Activated naive CD4-positive, alpha-beta T cell treated with anti-CD3 and anti-CD28 coated beads, Interleukin-2, amount 10 ng/mL, durations not matched to agents 7 days and 5 days (primary cell): ENCODE measurements at regions of chr2 and their contacts with region 1.

Region 1: DNA sequence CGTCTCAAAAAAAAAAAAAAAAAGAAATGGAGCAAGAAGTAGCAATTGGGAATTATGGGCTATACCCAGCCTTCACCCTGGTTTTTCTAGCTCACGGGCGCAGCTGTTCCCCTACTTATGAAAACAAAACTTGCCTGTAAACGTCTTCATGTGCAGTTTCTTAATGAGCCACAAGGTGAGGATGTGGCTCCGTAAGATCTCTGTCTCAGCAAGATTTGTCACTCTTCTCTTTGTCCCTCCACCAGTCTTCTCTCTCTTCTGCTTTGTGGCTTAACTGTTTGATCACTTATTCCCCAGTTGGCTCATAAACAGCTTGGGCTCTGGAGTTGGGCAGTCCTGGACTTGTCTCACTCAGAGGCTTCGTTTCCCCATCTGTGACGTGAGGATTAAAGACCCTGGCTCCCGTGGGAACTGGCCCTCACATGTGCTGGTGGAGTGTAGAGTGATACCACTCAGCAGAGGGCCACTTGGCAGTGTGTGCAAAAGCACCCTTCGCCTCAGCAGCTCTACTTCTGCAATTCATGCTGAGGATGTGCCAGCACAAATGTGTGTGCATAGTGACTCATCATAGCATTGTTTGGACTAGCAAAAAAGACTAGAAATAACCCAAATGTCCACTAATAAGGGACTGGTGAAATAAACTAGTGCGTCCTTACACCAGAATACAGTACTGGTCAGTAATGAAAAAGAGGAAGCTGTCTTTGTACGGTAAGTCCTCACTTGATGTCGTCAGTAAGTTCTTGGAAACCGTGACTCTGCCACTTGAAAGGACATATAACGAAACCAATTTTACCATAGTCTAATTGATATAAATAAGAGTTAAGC is 8.7 kb downstream of the CEP68 start:
- DNase-seq: peak; percentile 69
- H3K4me3 Mint-ChIP-seq: no peak overlapping the region
- H3K27ac Mint-ChIP-seq: no peak overlapping the region
- H3K4me1 Mint-ChIP-seq: peaks cover 38% of the 10 kb centered on the region
- H3K27me3 Mint-ChIP-seq: no peaks in the 10 kb centered on the region

Region 2: GRCh38 chr2:64766841-64767669 is 297.9 kb before region 1 on chr2:
- CTCF ChIA-PET with region 1: no interaction called
- DNase-seq: no peak
- H3K4me3 Mint-ChIP-seq: peak overlapping the region; percentile 84
- H3K27ac Mint-ChIP-seq: peak overlapping the region; percentile 93
- H3K4me1 Mint-ChIP-seq: peaks cover 34% of the 10 kb centered on the region
- H3K27me3 Mint-ChIP-seq: peaks cover 25% of the 10 kb centered on the region

Region 3: DNA sequence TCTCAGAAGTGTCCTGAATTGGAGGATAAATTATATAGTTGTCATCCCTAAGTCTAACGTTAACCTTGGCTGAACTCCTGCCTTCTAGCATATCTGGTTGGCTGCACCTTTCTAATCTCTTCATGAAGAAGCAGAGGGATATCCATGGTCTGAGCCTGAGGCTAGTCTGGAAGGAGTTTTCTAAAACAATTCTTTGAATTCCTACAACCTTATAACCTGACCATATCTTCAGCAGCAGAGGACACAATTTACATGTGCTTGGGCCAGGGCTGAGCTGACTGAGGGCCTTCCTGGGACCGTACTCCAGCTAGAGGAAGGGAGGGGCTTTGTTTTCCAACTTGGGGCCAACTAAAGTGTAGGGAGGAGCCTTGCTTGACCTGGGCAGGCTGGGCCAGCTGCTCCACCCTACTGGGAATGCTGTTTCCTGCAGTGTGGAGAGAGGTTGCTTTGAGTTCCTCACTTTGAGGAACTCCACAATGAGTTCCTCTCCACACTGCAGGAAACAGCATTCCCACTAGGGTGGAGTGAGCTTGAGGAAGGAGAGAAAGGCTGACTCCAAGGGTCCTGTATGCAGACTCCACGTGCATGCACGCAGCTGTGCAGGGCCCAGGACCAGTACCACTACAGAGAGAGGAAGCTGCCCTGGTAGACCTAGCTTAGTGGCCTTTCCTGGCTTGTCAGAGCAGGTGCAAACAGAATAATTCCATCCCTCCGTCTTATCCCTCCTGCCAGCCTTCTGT is 10.8 kb after region 1 on chr2:
- CTCF ChIA-PET with region 1: interaction called, 17 read pairs
- DNase-seq: no peak
- H3K4me3 Mint-ChIP-seq: no peak overlapping the region
- H3K27ac Mint-ChIP-seq: peak overlapping the region; percentile 79
- H3K4me1 Mint-ChIP-seq: no peaks in the 10 kb centered on the region
- H3K27me3 Mint-ChIP-seq: no peaks in the 10 kb centered on the region

Region 4: GRCh38 chr2:65129826-65130663 is 65.1 kb after region 1 on chr2 and contains the start of gene RAB1A:
- CTCF ChIA-PET with region 1: interaction called, 18 read pairs
- DNase-seq: peak; percentile 100
- H3K4me3 Mint-ChIP-seq: peak within 1 kb of the TSS; percentile 98
- H3K27ac Mint-ChIP-seq: peak within 1 kb of the TSS; percentile 98
- H3K4me1 Mint-ChIP-seq: peaks cover 37% of the 10 kb centered on the region
- H3K27me3 Mint-ChIP-seq: peaks cover 17% of the 10 kb centered on the region

Region 5: DNA sequence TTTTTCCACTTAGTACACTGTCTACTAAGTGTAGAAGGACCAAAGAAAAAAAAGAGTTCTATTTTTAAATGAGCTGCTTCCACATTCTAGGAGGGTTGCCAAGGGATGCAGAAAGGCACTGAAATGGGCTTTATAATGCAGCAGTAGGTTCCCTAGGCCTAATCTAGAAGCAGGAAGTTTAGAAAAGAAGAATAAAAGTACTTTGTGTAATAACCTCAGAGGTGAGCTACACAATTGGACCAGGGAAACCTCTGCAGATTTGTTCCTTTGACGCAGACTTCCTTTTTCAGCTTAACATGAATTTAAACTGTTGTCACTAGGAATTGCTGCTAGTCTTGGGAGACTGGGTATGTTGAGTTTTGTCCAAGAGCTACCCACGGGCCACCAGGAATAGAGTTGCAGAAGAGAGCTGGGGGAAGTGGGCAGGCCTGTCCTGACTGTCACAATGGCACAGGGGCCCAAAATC is 99.5 kb after region 1 on chr2:
- CTCF ChIA-PET with region 1: interaction called, 55 read pairs
- DNase-seq: no peak
- H3K4me3 Mint-ChIP-seq: no peak overlapping the region
- H3K27ac Mint-ChIP-seq: peak overlapping the region; percentile 42
- H3K4me1 Mint-ChIP-seq: peaks cover 23% of the 10 kb centered on the region
- H3K27me3 Mint-ChIP-seq: no peaks in the 10 kb centered on the region

Region 6: DNA sequence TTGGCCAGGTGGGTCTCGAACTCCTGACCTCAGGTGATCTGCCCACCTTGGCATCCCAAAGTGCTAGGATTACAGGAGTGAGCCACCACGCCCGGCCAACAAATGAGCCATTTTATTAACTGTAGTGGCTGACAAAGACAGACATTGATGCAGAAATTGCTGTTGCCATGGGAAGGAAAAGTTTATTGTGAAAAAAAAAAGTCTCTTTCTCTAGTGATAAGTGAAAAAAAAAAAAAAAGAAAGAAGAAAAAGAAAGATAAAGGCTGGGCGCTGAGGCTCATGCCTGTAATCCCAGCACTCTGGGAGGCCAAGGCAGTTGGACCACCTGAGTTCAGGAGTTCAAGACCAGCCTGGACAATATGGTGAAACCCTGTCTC is 104.8 kb after region 1 on chr2:
- CTCF ChIA-PET with region 1: interaction called, 55 read pairs
- DNase-seq: no peak
- H3K4me3 Mint-ChIP-seq: no peak overlapping the region
- H3K27ac Mint-ChIP-seq: no peak overlapping the region
- H3K4me1 Mint-ChIP-seq: no peaks in the 10 kb centered on the region
- H3K27me3 Mint-ChIP-seq: peaks cover 3% of the 10 kb centered on the region

Region 7: DNA sequence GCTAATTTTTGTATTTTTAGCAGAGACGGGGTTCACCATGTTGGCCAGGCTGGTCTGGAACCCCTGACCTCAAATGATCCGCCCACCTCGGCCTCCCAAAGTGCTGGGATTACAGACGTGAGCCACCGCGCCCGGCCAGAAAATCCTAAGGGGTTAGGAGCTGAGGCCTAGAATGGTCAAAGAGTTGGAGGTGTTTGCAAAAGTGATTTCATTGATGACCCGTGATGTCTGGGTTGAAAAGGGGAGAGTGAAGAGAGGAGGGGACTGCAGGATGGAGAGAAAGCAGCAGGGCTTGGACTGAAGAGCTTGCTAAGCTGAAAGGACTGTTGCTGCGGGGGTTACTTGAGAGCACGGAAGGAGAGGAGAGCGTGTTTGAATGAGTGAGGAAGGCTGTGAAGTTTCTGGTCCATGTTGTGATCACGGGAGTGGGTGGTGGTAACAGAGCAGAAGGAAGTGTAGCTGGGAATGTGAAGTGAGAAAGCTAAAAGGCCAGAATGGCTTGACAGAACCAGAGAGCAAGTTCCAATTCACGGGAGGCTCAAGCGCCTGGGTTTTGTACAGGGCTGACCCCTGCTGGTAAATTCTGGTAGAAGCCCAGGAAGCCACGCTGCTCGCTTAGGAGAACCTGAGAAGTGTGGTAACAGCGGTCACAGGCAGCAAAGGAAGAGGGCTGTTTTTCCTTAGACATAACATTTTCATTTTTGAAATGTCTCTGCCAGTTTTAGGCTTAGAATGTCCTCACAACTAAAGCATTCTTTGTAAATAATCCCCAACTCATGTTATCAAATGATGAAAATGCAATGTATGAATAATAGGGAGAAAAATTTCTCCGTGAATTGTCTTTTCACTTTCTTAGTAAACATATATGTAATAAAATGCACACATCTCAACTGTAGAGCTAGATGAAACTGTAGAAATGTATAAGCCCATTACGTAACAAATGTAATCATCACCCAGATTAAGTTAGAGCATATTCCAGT is 122.2 kb after region 1 on chr2:
- CTCF ChIA-PET with region 1: interaction called, 53 read pairs
- DNase-seq: peak; percentile 78
- H3K4me3 Mint-ChIP-seq: no peak overlapping the region
- H3K27ac Mint-ChIP-seq: peak overlapping the region; percentile 1
- H3K4me1 Mint-ChIP-seq: peaks cover 10% of the 10 kb centered on the region
- H3K27me3 Mint-ChIP-seq: peaks cover 36% of the 10 kb centered on the region